ENCODE measurements at regions of chr9 and their contacts with region 1.

Region 1: GRCh38 chr9:96566498-96567207 is 53.0 kb downstream of the CDC14B start:
- DNase-seq: peak; percentile 71
- ATAC-seq: peak; percentile 79
- H3K4me3 ChIP-seq: peak overlapping the region; percentile 85
- H3K27ac ChIP-seq: peak overlapping the region; percentile 53
- H3K4me1 ChIP-seq: peaks cover 17% of the 10 kb centered on the region
- H3K27me3 ChIP-seq: no peaks in the 10 kb centered on the region
- CTCF ChIP-seq: peak; percentile 55; the same call in 1 of the 2 replicates

Region 2: DNA sequence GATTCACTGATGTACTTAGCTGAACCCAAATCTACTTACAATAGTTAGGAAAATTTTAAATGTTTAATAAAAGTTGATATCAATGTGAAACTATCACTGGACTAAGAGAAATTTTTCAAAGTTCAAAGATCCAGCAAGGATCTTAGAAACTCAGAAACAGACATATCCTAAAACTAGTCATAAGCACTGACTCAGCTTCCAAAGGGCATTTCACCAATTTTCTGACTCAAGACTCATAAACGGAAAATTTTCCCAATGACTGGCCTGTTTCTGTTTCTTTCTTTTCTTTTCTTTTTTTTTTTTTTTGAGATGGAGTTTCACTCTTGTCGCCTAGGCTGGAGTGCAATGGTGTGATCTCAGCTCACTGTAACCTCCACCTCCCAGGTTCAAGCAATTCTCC is 13.6 kb before region 1 on chr9:
- CTCF ChIA-PET with region 1: no interaction called
- POLR2A ChIA-PET with region 1: interaction called, 14 read pairs
- intact Hi-C with region 1: no loop called
- DNase-seq: peak; percentile 80
- ATAC-seq: peak; percentile 57
- H3K4me3 ChIP-seq: no peak overlapping the region
- H3K27ac ChIP-seq: peak overlapping the region; percentile 49
- H3K4me1 ChIP-seq: peaks cover 21% of the 10 kb centered on the region
- H3K27me3 ChIP-seq: no peaks in the 10 kb centered on the region
- CTCF ChIP-seq: no peak

Region 3: DNA sequence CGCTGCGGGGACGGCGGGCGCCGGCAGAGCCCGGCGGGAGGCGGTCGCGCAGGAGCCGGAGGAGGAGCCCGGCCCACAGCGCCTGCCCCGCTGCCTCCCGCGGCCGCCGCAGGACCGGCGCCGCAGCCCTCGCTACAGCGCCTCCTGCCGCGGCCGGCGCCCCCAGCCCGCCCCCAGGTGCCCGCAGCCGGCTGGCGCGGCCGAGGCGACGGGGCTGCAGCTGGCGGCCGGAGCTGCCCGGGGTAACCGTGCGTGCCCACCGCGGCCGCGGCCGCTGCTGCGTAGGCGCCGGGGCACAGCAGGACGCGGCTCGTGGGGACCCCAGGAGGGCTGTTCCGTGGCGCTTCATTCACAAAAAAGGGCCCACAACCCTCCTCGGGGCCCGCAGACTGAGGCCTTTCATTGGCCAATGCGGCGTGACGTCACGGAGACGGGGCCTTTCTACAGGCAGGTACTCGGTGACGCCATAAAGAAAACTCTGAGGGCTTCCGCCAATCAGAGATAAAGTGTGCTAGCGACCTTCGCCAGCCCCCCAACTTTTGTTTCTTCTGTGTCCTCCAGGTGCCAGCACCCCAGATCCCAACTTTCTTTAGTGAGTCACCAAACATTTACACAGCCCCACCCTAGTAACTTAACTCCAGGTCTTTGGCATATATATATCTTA is 53.0 kb after region 1 on chr9 and contains the start of gene CDC14B:
- CTCF ChIA-PET with region 1: no interaction called
- POLR2A ChIA-PET with region 1: no interaction called
- intact Hi-C with region 1: loop called (anchors 5 kb)
- DNase-seq: peak; percentile 86
- ATAC-seq: peak; percentile 77
- H3K4me3 ChIP-seq: peak within 1 kb of the TSS; percentile 74
- H3K27ac ChIP-seq: peak within 1 kb of the TSS; percentile 32
- H3K4me1 ChIP-seq: peaks cover 23% of the 10 kb centered on the region
- H3K27me3 ChIP-seq: no peaks in the 10 kb centered on the region
- CTCF ChIP-seq: no peak
- total RNA-seq, gene CDC14B: 10.5 and 11.4 TPM in 2 replicates